ENCODE measurements at regions of chr1 and their contacts with region 1.

Region 1: GRCh38 chr1:92994105-92994712 is 32.9 kb upstream of the DIPK1A start:
- DNase-seq: peak in 1 of 2 donors; percentile 64
- H3K4me3 ChIP-seq: no peak overlapping the region
- H3K27ac ChIP-seq: no peak overlapping the region
- H3K4me1 ChIP-seq: no peaks in the 10 kb centered on the region
- H3K27me3 ChIP-seq: no peaks in the 10 kb centered on the region
- CTCF ChIP-seq: peak; percentile 31 to 92 (median 86)
- POLR2A ChIP-seq: no peak

Region 2: GRCh38 chr1:92859400-92860039 is 134.7 kb before region 1 on chr1:
- intact Hi-C with region 1: loop called (anchors 10 kb)
- DNase-seq: no peak
- H3K4me3 ChIP-seq: peak overlapping the region in 1 of 3 donors; percentile 21
- H3K27ac ChIP-seq: no peak overlapping the region
- H3K4me1 ChIP-seq: no peaks in the 10 kb centered on the region
- H3K27me3 ChIP-seq: no peaks in the 10 kb centered on the region
- CTCF ChIP-seq: no peak
- POLR2A ChIP-seq: no peak

Region 3: DNA sequence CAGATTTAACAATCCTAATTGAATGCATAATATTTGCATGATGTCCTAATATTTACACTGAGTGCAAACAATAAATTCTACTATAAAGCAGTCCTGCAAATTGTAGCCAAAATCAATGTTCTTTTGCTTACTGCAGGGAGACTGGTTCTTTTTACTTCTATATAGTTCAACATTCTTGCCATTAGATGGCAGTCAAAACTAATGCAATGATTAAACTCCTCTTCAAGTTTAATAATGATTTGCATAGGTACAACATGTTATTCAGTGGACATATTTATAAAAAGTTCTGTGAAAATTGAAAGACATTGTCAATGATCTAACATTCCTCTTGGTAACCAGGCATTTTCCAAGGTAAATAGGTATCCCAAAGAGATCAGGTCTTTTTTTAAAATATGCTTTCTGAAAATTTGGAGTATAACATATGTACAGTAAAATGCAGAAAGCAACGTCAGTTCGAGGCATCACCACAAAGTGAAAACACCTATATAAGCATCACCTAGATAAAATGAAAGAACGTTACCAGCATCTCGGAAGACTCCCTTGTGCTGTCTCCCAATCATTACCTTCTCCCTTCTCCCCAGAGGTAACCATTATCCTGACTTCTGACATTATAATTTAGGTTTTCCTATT is 443.9 kb after region 1 on chr1:
- intact Hi-C with region 1: no loop called
- DNase-seq: no peak
- H3K4me3 ChIP-seq: no peak overlapping the region
- H3K27ac ChIP-seq: no peak overlapping the region
- H3K4me1 ChIP-seq: no peaks in the 10 kb centered on the region
- H3K27me3 ChIP-seq: no peaks in the 10 kb centered on the region
- CTCF ChIP-seq: peak; percentile 23 to 75 (median 64)
- POLR2A ChIP-seq: no peak

Region 4: DNA sequence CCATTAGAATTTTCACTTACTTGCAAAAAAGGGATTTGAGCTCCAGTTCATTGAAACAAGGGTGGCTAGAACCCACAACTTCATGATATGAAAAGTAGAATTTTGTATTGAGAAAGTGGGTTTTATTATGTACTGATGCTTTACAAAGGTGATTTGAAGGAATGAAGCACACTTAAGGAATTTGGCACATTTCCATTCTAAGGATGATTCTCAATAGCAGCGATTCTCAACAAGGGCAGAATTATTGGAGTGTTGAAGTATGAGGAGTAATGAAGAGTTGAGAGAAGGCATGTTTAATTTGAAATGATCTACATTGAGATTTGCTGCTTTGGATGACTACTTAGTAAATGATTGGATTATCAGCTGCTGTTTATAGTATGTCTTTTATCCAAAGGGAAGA is 508.4 kb after region 1 on chr1:
- intact Hi-C with region 1: no loop called
- DNase-seq: no peak
- H3K4me3 ChIP-seq: no peak overlapping the region
- H3K27ac ChIP-seq: no peak overlapping the region
- H3K4me1 ChIP-seq: no peaks in the 10 kb centered on the region
- H3K27me3 ChIP-seq: no peaks in the 10 kb centered on the region
- CTCF ChIP-seq: no peak
- POLR2A ChIP-seq: no peak